ENCODE measurements at regions of chr20 and their contacts with region 1.

Region 1: GRCh38 chr20:44388466-44389023 is 33.0 kb downstream of the HNF4A start:
- DNase-seq: peak; percentile 49 to 76
- H3K4me3 ChIP-seq: no peak overlapping the region
- H3K27ac ChIP-seq: no peak overlapping the region
- H3K4me1 ChIP-seq: peaks cover 0 to 10% (median 6%) of the 10 kb centered on the region in 4 donors
- H3K27me3 ChIP-seq: peaks cover 0 to 60% of the 10 kb centered on the region in 2 donors
- CTCF ChIP-seq: peak; percentile 65 to 67

Region 2: GRCh38 chr20:44324343-44324742 is 64.2 kb before region 1 on chr20:
- intact Hi-C with region 1: no loop called
- DNase-seq: no peak
- H3K4me3 ChIP-seq: no peak overlapping the region
- H3K27ac ChIP-seq: no peak overlapping the region
- H3K4me1 ChIP-seq: peaks cover 0 to 5% (median 4%) of the 10 kb centered on the region in 4 donors
- H3K27me3 ChIP-seq: peaks cover 0 to 36% of the 10 kb centered on the region in 2 donors
- CTCF ChIP-seq: no peak

Region 3: DNA sequence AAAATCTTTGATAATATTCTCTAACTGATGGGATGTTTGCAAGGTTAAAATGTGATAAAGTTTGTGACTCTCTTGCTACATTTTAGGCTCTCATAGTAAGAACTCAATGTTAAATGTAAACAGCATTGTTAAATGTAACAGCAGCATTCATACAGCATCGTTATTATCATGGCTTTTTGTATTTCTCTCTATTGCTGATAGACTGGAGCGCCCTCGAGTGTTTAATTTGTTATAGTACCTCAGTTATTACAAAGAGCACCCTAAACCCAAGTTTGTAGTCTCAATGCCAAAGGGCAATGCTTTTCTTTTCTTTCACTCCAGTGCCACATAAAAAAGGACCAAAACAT is 72.2 kb after region 1 on chr20:
- intact Hi-C with region 1: loop called (anchors 10 kb)
- DNase-seq: no peak
- H3K4me3 ChIP-seq: no peak overlapping the region
- H3K27ac ChIP-seq: no peak overlapping the region
- H3K4me1 ChIP-seq: no peaks in the 10 kb centered on the region
- H3K27me3 ChIP-seq: no peaks in the 10 kb centered on the region
- CTCF ChIP-seq: no peak

Region 4: DNA sequence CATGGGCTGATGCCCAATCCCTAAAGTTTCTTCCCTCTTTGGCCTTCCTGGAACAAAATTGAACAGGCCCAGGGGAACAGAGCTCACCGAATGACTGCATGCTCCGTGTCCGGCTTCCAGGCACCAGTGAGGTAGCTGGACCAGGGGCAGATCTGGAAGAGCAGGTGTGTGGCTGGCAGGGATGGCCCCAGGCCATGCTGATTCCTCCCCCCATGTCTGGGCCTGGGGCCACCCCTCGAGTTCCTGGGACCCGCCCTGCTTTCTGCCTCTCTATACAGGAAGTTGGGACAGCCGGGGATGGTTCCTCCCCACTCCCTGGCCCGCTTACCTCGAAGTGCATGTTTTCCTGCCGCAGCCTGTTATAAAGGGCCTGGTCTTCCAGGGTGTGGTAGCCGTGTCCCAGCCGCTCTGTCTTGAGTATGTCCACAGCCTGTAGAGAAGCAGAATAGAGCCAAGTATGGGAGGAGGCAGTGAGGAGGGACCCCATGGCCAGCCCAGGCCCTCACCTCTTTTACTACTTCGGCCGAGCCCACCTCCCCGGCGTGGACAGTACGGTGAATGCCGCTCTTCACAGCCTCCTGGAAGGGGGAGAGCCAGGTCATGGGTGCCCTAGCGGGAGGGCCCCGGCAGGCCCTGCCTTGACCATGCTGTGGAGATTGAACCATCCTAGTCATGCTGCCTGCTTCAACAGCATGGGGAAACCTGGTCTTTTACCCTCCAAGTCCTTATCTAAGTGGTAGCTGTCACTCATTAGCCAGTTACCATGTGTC is 234.1 kb after region 1 on chr20:
- intact Hi-C with region 1: loop called (anchors 5 kb)
- DNase-seq: no peak
- H3K4me3 ChIP-seq: no peak overlapping the region
- H3K27ac ChIP-seq: no peak overlapping the region
- H3K4me1 ChIP-seq: peaks cover 0 to 8% (median 2%) of the 10 kb centered on the region in 4 donors
- H3K27me3 ChIP-seq: no peaks in the 10 kb centered on the region
- CTCF ChIP-seq: no peak

Region 5: GRCh38 chr20:44683263-44684046 is 294.9 kb after region 1 on chr20:
- intact Hi-C with region 1: loop called (anchors 5 kb)
- DNase-seq: peak in 1 of 2 donors; percentile 67
- H3K4me3 ChIP-seq: no peak overlapping the region
- H3K27ac ChIP-seq: no peak overlapping the region
- H3K4me1 ChIP-seq: peaks cover 0 to 10% (median 2%) of the 10 kb centered on the region in 4 donors
- H3K27me3 ChIP-seq: no peaks in the 10 kb centered on the region
- CTCF ChIP-seq: peak; percentile 67 to 70

Region 6: DNA sequence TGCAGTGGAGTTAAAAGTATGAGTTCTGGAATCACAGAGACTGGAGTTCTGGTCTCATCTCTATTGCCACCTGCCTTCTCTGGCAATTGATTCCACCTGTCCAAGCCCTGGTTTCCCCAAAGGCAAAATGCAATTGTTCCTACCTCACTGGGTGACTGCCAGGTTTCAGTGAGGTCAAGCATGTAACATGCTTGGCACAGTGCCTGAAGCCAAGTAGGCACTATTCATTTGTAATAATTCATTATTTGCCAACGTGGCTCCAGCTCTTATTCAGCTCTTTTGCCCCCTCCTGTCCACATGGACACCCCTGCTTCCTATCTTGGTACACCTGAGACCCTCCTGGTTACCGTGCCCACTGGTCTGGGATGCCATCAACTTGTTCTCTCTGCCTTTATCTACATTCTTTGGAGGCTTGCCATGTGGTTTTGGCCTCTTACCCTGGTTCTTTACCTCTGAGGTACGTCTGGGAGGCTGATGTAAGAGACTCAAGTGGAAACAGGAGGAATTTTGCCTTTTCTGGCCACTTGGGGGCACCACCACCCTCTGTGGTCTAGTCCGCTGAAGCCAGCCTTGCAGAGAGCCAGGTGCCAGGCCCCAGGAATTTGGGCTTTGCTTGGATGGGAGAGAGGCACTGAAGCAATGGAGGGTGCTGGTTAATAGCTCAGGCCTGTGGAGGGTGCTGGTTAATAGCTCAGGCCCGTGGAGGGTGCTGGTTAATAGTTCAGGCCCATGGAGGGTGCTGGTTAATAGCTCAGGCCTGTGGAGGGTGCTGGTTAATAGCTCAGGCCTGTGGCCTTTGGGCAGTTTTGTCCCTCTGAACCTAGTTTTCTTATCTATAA is 358.8 kb after region 1 on chr20:
- intact Hi-C with region 1: loop called (anchors 10 kb)
- DNase-seq: peak; percentile 86 to 90
- H3K4me3 ChIP-seq: peak overlapping the region; percentile 66 to 89
- H3K27ac ChIP-seq: peak overlapping the region; percentile 75 to 86
- H3K4me1 ChIP-seq: peaks cover 0 to 56% (median 36%) of the 10 kb centered on the region in 4 donors
- H3K27me3 ChIP-seq: peaks cover 0 to 28% of the 10 kb centered on the region in 2 donors
- CTCF ChIP-seq: peak; percentile 70 to 74

Measured in tibial artery (tissue), 4 donors.